Panc1 (cell line): ENCODE measurements at regions of chr14 and their contacts with region 1.

Region 1: DNA sequence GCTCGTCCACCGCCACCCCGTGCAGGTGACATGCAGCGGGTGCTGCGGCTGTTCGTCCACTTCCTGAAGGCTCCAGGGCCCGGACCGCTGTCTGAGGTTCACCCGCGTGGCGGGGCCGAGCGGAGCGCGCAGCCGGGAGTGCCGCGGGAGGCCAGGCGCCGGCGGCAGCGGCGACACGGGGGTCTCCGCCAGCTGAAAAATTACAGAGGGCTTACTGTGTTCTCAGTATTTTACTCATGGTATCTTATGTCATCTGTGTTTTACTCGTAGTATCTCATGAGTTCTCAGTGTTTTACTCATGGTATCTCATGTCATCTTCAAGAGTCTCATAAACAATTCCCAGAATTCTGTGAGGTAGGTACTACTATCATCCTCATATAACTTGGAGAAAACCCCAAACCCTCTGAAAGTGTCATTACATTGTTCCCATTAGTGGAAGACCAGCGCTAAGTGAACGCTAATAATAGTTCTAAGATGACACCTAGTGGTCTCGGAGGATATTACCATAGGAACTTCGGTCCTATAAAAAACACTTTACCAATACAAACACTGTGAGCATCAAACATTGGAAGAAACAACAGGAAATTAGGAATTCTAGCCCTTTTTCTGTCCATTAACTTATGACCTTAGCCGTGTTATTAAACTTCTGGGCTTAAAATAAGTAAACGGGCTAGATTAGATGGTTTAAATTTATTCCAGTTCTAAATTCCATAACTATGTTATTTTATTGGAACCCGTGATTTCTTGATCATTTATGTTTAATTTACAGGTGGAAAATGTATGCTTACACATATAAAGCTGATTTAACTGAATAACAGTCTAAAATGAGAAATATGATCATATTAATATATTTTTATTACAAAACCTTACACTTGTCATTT is 32.4 kb downstream of the AK7 start:
- DNase-seq: peak; percentile 32
- ATAC-seq: peak; percentile 89
- H3K4me3 ChIP-seq: peak overlapping the region; percentile 30 to 47
- H3K27ac ChIP-seq: no peak overlapping the region
- H3K4me1 ChIP-seq: no peaks in the 10 kb centered on the region
- H3K27me3 ChIP-seq: no peaks in the 10 kb centered on the region; the same call in 1 of the 2 replicates
- CTCF ChIP-seq: peak; percentile 59; the same call in 1 of the 2 replicates

Region 2: DNA sequence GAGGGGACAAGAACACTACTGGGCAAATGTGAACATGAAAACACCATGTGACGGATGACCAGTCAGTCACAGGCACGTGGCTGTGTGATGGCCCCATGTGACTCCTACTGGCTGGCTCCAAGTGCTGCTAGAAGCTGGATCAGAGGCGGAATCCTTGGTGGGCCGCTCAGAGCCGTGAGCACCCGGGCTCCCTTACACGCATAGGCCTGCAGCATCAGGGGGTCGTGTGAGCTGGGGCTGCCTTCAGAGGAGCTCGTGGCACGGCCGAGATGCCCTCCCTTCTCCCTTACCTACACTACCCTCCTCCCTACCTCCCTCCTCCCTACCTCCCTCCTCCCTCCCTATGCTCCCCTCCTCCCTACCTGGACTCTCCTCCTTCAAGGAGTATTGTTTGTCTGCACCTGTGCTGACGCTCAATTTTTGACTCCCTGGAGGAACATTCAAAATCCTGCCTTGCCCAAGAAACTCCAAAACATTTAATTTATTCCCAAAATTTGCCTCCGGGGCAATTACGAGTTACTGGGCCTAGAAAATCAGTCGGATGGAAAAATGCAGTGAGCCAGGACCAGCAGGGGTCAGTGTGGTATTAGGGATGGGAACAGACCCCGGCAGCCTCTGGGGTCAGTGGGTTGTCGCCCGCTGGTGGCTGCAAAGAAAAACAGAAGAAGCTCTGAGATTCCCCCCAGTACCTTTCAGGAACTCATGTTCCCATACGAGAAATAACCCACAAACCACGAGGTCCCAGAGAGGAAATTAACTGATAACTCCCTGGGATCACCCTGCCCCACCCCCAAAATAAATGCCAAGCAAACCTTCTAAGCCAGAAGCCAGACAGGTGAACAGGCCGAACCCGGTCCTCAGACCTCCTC is 324.0 kb before region 1 on chr14:
- CTCF ChIA-PET with region 1: no interaction called
- POLR2A ChIA-PET with region 1: no interaction called
- in situ Hi-C with region 1: no loop called
- intact Hi-C with region 1: loop called (anchors 5 kb)
- DNase-seq: peak; percentile 28
- ATAC-seq: peak; percentile 59
- H3K4me3 ChIP-seq: no peak overlapping the region
- H3K27ac ChIP-seq: no peak overlapping the region
- H3K4me1 ChIP-seq: peaks cover 7% of the 10 kb centered on the region
- H3K27me3 ChIP-seq: no peaks in the 10 kb centered on the region
- CTCF ChIP-seq: peak; percentile 88

Region 3: DNA sequence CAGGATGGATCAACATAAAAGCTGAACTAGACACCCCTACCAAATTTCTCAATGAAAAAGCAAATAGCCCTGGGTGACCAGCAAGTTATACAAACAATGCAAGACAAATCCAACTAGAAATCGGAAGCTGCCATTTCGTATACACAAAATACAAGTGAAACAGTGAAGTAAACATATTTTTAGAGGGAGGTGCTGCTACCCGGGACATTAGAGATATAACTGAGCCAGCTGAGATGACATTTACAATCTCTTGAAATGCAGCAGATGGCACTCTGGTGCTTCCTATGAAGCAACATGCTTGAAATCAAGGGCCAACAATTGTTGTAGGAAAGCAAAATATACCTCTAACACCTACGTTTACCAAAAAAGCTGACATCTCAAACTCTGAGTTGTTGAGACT is 142.9 kb before region 1 on chr14:
- CTCF ChIA-PET with region 1: interaction called, 3 read pairs
- POLR2A ChIA-PET with region 1: no interaction called
- in situ Hi-C with region 1: no loop called
- intact Hi-C with region 1: loop called (anchors 5 kb)
- DNase-seq: no peak
- ATAC-seq: no peak
- H3K4me3 ChIP-seq: no peak overlapping the region
- H3K27ac ChIP-seq: no peak overlapping the region
- H3K4me1 ChIP-seq: no peaks in the 10 kb centered on the region
- H3K27me3 ChIP-seq: no peaks in the 10 kb centered on the region
- CTCF ChIP-seq: no peak; the same call in 1 of the 2 replicates

Region 4: GRCh38 chr14:96297000-96297399 is 127.3 kb before region 1 on chr14:
- CTCF ChIA-PET with region 1: interaction called, 7 read pairs
- POLR2A ChIA-PET with region 1: no interaction called
- in situ Hi-C with region 1: no loop called
- intact Hi-C with region 1: loop called (anchors 1 kb)
- DNase-seq: no peak
- ATAC-seq: no peak
- H3K4me3 ChIP-seq: no peak overlapping the region
- H3K27ac ChIP-seq: no peak overlapping the region
- H3K4me1 ChIP-seq: no peaks in the 10 kb centered on the region
- H3K27me3 ChIP-seq: no peaks in the 10 kb centered on the region
- CTCF ChIP-seq: peak; percentile 50; the same call in 1 of the 2 replicates